Activated CD4-positive, alpha-beta memory T cell treated with anti-CD3 and anti-CD28 coated beads for 36 hours (primary cell): ENCODE measurements at regions of chr10 and their contacts with region 1.

Region 1: DNA sequence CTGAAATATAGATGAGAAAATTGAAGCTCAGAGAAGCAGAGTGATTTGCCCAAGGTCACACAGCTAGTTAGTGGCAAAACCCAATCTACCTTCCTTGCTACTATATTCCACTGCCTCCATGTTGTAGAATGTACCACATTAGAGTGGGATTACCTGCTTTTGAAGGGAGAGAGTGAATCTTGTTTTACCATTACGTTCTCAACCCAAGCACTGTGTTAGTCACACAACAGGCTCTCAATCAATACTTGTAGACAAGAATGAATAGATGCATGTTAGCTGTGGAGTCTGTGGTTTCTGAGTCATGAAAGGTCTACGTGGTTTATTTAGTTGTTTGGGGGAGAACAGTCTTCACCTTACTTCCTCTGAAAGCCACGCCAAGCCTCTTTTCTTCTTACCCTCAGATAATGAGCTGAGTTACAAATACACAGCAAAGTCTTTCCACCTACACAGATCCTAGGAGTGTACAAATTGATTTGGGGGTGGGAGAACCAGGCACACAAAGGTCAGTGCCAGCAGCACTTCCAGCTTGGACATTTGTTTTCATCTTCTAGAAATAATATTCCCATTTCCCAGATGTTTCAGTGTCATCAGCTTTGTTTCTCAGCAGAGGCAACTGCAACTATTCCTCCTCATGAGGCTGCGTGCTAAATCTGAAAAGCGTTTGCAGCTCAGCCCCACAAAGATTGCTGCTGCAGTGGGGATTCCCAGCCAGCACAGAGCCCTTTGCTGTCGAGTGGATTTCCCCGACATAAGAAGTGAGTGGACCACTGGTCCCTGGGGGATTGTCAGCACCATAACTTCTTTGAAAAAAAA is 71.5 kb upstream of the ADO start:
- DNase-seq: peak; percentile 71
- H3K4me3 Mint-ChIP-seq: no peak overlapping the region
- H3K27ac Mint-ChIP-seq: no peak overlapping the region
- H3K4me1 Mint-ChIP-seq: peaks cover 19% of the 10 kb centered on the region
- H3K27me3 Mint-ChIP-seq: peaks cover 3% of the 10 kb centered on the region

Region 2: DNA sequence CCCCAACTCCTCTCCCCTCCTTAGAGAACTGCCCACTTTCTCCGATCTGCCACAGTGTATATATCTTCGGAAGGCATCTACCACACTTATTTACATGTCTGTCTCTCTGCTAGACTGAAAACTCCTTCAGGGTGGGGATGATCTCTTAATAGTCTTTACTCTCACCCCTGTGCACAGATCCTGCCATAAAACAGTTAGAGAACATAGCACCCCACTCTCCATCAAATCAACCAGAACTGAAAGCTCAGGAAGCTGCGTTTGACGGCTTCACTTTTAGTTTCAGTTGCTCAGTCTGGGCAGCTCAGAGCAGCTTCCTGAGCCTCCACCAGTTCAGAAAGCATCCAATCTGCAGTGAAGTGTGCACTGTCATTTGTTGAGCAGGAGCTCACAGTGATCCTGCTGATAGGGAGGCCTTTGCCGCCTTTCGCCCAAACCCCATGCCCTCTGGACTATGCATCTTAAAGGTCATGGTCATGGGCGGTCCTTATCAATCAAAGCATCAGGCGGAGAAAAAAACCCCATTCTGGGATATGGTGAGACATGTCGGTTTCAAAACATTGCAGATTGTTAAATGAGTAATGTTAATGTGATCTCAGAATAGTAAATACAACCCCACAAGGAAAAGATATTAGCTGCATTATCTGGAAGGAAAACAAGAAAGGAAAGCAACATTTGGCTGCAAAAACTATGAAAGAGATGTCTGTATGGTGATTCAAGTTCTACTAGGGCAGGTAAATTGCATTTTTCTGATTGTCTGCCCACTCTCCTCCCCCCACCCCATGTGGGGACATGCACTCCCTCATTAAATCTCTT is 95.6 kb before region 1 on chr10:
- CTCF ChIA-PET with region 1: interaction called, 3 read pairs
- POLR2A ChIA-PET with region 1: interaction called, 15 read pairs
- intact Hi-C with region 1: loop called (anchors 1 kb)
- DNase-seq: peak; percentile 84
- H3K4me3 Mint-ChIP-seq: no peak overlapping the region
- H3K27ac Mint-ChIP-seq: no peak overlapping the region
- H3K4me1 Mint-ChIP-seq: peaks cover 26% of the 10 kb centered on the region
- H3K27me3 Mint-ChIP-seq: no peaks in the 10 kb centered on the region

Region 3: GRCh38 chr10:62779487-62780248 is 46.6 kb after region 1 on chr10:
- CTCF ChIA-PET with region 1: interaction called, 4 read pairs
- POLR2A ChIA-PET with region 1: interaction called, 9 read pairs
- intact Hi-C with region 1: loop called (anchors 1 kb)
- DNase-seq: peak; percentile 89
- H3K4me3 Mint-ChIP-seq: no peak overlapping the region
- H3K27ac Mint-ChIP-seq: no peak overlapping the region
- H3K4me1 Mint-ChIP-seq: peaks cover 22% of the 10 kb centered on the region
- H3K27me3 Mint-ChIP-seq: peaks cover 1% of the 10 kb centered on the region

Region 4: DNA sequence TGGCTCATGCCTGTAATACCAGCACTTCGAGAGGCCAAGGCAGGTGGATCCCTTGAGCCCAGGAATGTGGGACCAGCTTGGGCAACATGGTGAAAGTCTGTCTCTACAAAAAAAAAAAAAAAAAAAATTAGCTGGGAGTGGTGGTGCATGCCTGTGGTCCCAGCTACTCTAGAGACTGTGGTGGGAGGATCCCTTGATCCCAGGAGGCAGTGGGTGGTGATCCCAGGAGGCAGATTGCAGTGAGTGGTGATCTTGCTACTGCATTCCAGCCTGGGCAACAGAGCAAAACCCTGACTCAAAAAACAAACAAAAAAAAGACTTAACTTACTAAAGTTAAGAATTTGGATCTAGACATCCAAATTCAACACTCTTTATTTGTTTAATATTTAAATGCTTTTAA is 61.3 kb after region 1 on chr10:
- CTCF ChIA-PET with region 1: no interaction called
- POLR2A ChIA-PET with region 1: no interaction called
- intact Hi-C with region 1: no loop called
- DNase-seq: no peak
- H3K4me3 Mint-ChIP-seq: no peak overlapping the region
- H3K27ac Mint-ChIP-seq: no peak overlapping the region
- H3K4me1 Mint-ChIP-seq: no peaks in the 10 kb centered on the region
- H3K27me3 Mint-ChIP-seq: peaks cover 15% of the 10 kb centered on the region

Region 5: GRCh38 chr10:62851442-62851841 is 118.4 kb after region 1 on chr10:
- CTCF ChIA-PET with region 1: no interaction called
- POLR2A ChIA-PET with region 1: no interaction called
- intact Hi-C with region 1: loop called (anchors 1 kb)
- DNase-seq: peak; percentile 55
- H3K4me3 Mint-ChIP-seq: no peak overlapping the region
- H3K27ac Mint-ChIP-seq: no peak overlapping the region
- H3K4me1 Mint-ChIP-seq: peaks cover 46% of the 10 kb centered on the region
- H3K27me3 Mint-ChIP-seq: peaks cover 8% of the 10 kb centered on the region

Region 6: GRCh38 chr10:62992145-62992721 is 259.2 kb after region 1 on chr10:
- CTCF ChIA-PET with region 1: no interaction called
- POLR2A ChIA-PET with region 1: no interaction called
- intact Hi-C with region 1: loop called (anchors 1 kb)
- DNase-seq: peak; percentile 20
- H3K4me3 Mint-ChIP-seq: peak overlapping the region; percentile 24
- H3K27ac Mint-ChIP-seq: peak overlapping the region; percentile 84
- H3K4me1 Mint-ChIP-seq: peaks cover 54% of the 10 kb centered on the region
- H3K27me3 Mint-ChIP-seq: peaks cover 7% of the 10 kb centered on the region